ENCODE measurements at regions of chrX and their contacts with region 1.

Region 1: DNA sequence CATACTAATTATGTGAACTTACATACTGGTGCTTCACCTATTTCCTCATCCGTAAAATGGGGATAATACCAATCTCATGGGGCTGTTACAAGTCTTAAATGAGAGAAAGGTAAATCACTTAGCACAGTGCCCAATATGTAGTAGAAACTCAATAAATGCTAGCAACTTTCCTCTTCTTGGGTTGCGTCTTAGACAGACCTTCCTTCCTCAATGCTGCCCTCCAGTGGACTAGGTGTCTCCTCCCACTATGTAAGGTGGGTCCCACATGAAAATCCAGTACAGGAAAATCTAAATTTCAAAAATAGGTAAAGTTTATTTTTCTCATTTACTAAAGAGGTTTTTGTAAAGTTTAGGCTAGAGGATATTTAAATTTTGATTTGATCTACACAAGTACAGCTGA is 20.6 kb downstream of the ZDHHC9 start:
- DNase-seq: peak; percentile 16 to 81
- ATAC-seq: peak; percentile 77 to 89 (median 85)
- H3K4me3 ChIP-seq: no peak overlapping the region
- H3K4me3 Mint-ChIP-seq: no peak overlapping the region
- H3K27ac ChIP-seq: no peak overlapping the region
- H3K27ac Mint-ChIP-seq: no peak overlapping the region
- H3K4me1 ChIP-seq: no peaks in the 10 kb centered on the region
- H3K4me1 Mint-ChIP-seq: no peaks in the 10 kb centered on the region
- H3K27me3 ChIP-seq: no peaks in the 10 kb centered on the region
- H3K27me3 Mint-ChIP-seq: no peaks in the 10 kb centered on the region
- CTCF ChIP-seq: peak; percentile 68

Region 2: DNA sequence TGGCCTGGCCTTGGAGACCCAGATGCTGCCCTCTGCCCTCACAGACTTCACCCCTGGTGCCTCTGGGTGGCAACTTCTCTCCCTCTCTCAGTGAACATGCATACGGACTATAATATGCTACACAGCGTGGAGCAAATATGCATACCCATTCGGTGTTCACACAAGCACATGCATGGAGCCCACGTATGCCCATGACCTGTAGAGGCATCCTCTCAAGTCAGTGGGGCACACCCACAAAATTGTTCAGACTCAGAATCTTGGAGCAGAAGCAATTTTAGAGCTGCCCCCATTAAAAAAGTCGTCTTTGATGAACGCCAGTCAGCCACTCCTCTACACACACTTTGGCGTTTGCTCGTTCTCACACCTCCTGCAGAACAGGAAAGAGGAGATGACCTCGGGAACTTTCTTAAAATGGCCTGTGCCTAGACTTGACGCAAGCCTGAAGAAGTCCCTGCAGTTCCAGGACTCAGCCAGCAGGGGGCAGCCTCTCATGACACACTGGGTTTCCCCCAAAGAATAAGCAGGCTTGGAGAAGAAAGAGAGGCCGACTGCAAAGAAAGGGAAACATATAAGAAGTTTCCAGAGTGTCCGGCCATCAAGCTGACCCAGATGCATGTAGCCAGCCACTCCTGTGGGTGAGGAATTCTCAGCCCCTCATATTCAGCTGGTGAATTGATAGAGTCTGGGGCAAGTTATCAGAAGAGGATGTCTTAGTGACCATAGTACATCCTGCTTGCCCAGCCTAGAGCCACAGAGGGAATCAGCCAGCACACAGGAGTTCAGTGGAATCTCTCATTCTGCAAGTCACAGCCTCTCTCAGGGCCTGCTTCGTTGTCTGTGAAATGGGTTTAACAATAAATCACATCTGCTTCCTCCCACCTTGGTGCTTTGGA is 185.7 kb before region 1 on chrX:
- intact Hi-C with region 1: loop called (anchors 1 kb)
- DNase-seq: peak; percentile 68 to 83
- ATAC-seq: peak; percentile 87 to 93 (median 90)
- H3K4me3 ChIP-seq: no peak overlapping the region
- H3K4me3 Mint-ChIP-seq: no peak overlapping the region
- H3K27ac ChIP-seq: no peak overlapping the region
- H3K27ac Mint-ChIP-seq: no peak overlapping the region
- H3K4me1 ChIP-seq: peaks cover 9% of the 10 kb centered on the region
- H3K4me1 Mint-ChIP-seq: peaks cover 0 to 6% of the 10 kb centered on the region in 2 donors
- H3K27me3 ChIP-seq: no peaks in the 10 kb centered on the region
- H3K27me3 Mint-ChIP-seq: no peaks in the 10 kb centered on the region
- CTCF ChIP-seq: peak; percentile 73

Region 3: GRCh38 chrX:129678614-129679195 is 144.4 kb before region 1 on chrX:
- intact Hi-C with region 1: loop called (anchors 1 kb)
- DNase-seq: peak; percentile 18 to 65
- ATAC-seq: peak; percentile 60 to 70 (median 66)
- H3K4me3 ChIP-seq: peak overlapping the region; percentile 46
- H3K4me3 Mint-ChIP-seq: peak overlapping the region; percentile 59
- H3K27ac ChIP-seq: peak overlapping the region; percentile 49
- H3K27ac Mint-ChIP-seq: peak overlapping the region in 1 of 2 donors; percentile 75
- H3K4me1 ChIP-seq: peaks cover 18% of the 10 kb centered on the region
- H3K4me1 Mint-ChIP-seq: peaks cover 0 to 20% of the 10 kb centered on the region in 2 donors
- H3K27me3 ChIP-seq: no peaks in the 10 kb centered on the region
- H3K27me3 Mint-ChIP-seq: peaks cover 3 to 7% of the 10 kb centered on the region in 2 donors
- CTCF ChIP-seq: no peak

Region 4: DNA sequence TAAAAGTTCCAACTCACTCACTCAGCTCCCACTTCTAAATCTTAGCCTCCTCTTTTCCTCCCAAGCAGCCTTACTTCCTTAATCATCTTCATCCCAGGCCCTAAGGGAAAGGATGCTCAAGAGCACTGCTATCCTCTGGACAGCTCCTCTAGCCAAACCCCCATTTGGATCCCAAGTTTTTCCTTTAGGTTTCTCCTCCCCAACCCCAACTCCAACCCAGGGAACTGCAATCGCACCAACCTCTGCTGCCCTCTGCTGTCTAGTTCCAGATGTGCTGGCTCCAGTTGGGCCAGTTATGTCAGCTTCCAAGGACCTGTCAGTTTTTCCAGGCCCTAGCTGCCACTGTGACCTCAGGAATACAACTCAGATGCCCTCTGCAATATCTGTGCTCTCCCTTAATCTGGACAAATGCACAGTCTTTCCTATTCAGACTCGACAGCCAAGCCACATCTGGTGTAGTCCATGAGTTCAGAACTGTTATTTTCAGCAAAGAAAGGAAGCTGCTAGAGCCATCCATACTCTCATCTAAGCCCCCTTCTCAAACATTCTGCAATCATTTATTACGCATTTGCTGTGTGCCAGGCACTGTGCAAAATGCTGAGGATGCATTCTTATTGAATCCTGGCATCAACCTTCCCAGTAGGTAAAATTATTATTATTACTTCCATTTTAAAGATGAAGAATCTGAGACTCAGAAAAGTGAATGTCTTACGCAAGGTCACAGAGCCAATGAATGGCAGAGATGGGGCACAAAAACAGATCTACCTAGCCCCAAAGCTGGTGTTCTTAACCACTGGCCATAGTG is 96.6 kb before region 1 on chrX:
- intact Hi-C with region 1: loop called (anchors 1 kb)
- DNase-seq: peak in 1 of 2 donors; percentile 56
- ATAC-seq: peak in 2 of 3 donors; percentile 44 to 58
- H3K4me3 ChIP-seq: no peak overlapping the region
- H3K4me3 Mint-ChIP-seq: no peak overlapping the region
- H3K27ac ChIP-seq: no peak overlapping the region
- H3K27ac Mint-ChIP-seq: no peak overlapping the region
- H3K4me1 ChIP-seq: peaks cover 10% of the 10 kb centered on the region
- H3K4me1 Mint-ChIP-seq: peaks cover 22 to 35% of the 10 kb centered on the region in 2 donors
- H3K27me3 ChIP-seq: no peaks in the 10 kb centered on the region
- H3K27me3 Mint-ChIP-seq: peaks cover 0 to 25% of the 10 kb centered on the region in 2 donors
- CTCF ChIP-seq: peak; percentile 50

Region 5: GRCh38 chrX:129754056-129755024 is 68.8 kb before region 1 on chrX:
- intact Hi-C with region 1: loop called (anchors 2 kb)
- DNase-seq: peak in 1 of 2 donors; percentile 23
- ATAC-seq: peak in 1 of 3 donors; percentile 22
- H3K4me3 ChIP-seq: no peak overlapping the region
- H3K4me3 Mint-ChIP-seq: peak overlapping the region; percentile 49
- H3K27ac ChIP-seq: peak overlapping the region; percentile 35
- H3K27ac Mint-ChIP-seq: peak overlapping the region; percentile 82 to 88
- H3K4me1 ChIP-seq: peaks cover 66% of the 10 kb centered on the region
- H3K4me1 Mint-ChIP-seq: peaks cover 66% of the 10 kb centered on the region in 2 donors
- H3K27me3 ChIP-seq: no peaks in the 10 kb centered on the region
- H3K27me3 Mint-ChIP-seq: no peaks in the 10 kb centered on the region
- CTCF ChIP-seq: peak; percentile 25